Endothelial cell of umbilical vein (primary cell): ENCODE measurements at regions of chr10 and their contacts with region 1.

Region 1: GRCh38 chr10:44878706-44879530 is 32.2 kb upstream of the TMEM72 start:
- DNase-seq: peak; percentile 80
- H3K4me3 ChIP-seq: peak overlapping the region in 2 of 3 experiments; percentile 14 to 35
- H3K27ac ChIP-seq: no peak overlapping the region
- H3K4me1 ChIP-seq: peaks cover 7% of the 10 kb centered on the region
- H3K27me3 ChIP-seq: peaks cover 2 to 3% of the 10 kb centered on the region in 2 experiments
- CTCF ChIP-seq: no peak
- POLR2A ChIP-seq: no peak

Region 2: DNA sequence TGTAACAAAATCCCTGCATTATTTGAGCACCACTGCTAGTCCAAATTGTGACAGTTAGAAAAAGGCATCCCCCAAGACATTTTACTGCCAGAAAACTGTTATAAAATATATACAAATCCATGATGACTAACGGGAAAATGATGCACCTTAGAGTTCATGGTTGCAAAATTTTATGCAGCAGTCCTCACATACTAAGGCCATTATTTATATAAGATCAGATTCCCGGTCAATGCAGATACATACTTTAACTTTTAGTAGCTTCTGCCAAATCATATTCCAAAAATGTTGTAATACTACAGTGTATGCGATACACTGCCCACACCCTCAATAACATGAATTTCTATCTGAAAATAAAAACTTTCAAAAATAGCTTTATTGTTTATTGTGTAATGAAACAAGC is 990.3 kb before region 1 on chr10:
- CTCF ChIA-PET with region 1: no interaction called
- POLR2A ChIA-PET with region 1: no interaction called
- dilution Hi-C with region 1: no loop called
- intact Hi-C with region 1: loop called (anchors 10 kb)
- DNase-seq: no peak
- H3K4me3 ChIP-seq: no peak overlapping the region
- H3K27ac ChIP-seq: no peak overlapping the region
- H3K4me1 ChIP-seq: no peaks in the 10 kb centered on the region
- H3K27me3 ChIP-seq: peaks cover 14 to 24% of the 10 kb centered on the region in 2 experiments
- CTCF ChIP-seq: no peak
- POLR2A ChIP-seq: no peak

Region 3: GRCh38 chr10:44922796-44923545 is 44.1 kb after region 1 on chr10:
- CTCF ChIA-PET with region 1: no interaction called
- POLR2A ChIA-PET with region 1: no interaction called
- dilution Hi-C with region 1: no loop called
- intact Hi-C with region 1: loop called (anchors 2 kb)
- DNase-seq: no peak
- H3K4me3 ChIP-seq: no peak overlapping the region
- H3K27ac ChIP-seq: no peak overlapping the region
- H3K4me1 ChIP-seq: no peaks in the 10 kb centered on the region
- H3K27me3 ChIP-seq: no peaks in the 10 kb centered on the region
- CTCF ChIP-seq: no peak
- POLR2A ChIP-seq: no peak

Region 4: GRCh38 chr10:44947371-44948152 is 68.6 kb after region 1 on chr10:
- CTCF ChIA-PET with region 1: no interaction called
- POLR2A ChIA-PET with region 1: no interaction called
- dilution Hi-C with region 1: no loop called
- intact Hi-C with region 1: no loop called
- DNase-seq: no peak
- H3K4me3 ChIP-seq: no peak overlapping the region
- H3K27ac ChIP-seq: no peak overlapping the region
- H3K4me1 ChIP-seq: no peaks in the 10 kb centered on the region
- H3K27me3 ChIP-seq: peaks cover 5 to 7% of the 10 kb centered on the region in 2 experiments
- CTCF ChIP-seq: no peak
- POLR2A ChIP-seq: no peak

Region 5: DNA sequence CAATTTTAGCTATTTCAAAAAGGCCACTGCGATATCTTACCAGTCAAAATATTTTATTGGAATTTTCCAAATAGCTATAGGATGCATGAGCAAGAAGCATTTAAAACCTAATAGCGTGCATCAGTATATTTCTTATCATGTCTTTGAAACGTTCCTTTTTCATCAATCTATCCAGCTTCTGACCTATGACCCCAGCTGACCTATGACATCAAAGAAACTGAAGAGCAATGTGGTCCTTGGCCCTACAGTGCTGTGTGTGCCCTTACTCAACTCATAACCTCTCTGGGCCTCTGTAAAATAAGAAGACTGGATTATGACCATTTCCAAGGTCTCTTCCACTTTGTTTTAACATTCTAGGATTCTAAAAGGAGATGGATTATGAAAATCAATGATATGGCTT is 240.0 kb after region 1 on chr10:
- CTCF ChIA-PET with region 1: no interaction called
- POLR2A ChIA-PET with region 1: no interaction called
- dilution Hi-C with region 1: no loop called
- intact Hi-C with region 1: no loop called
- DNase-seq: no peak
- H3K4me3 ChIP-seq: no peak overlapping the region
- H3K27ac ChIP-seq: no peak overlapping the region
- H3K4me1 ChIP-seq: no peaks in the 10 kb centered on the region
- H3K27me3 ChIP-seq: no peaks in the 10 kb centered on the region
- CTCF ChIP-seq: no peak
- POLR2A ChIP-seq: no peak